Gastrocnemius medialis (tissue), 4 donors: ENCODE measurements at regions of chr1 and their contacts with region 1.

Region 1: DNA sequence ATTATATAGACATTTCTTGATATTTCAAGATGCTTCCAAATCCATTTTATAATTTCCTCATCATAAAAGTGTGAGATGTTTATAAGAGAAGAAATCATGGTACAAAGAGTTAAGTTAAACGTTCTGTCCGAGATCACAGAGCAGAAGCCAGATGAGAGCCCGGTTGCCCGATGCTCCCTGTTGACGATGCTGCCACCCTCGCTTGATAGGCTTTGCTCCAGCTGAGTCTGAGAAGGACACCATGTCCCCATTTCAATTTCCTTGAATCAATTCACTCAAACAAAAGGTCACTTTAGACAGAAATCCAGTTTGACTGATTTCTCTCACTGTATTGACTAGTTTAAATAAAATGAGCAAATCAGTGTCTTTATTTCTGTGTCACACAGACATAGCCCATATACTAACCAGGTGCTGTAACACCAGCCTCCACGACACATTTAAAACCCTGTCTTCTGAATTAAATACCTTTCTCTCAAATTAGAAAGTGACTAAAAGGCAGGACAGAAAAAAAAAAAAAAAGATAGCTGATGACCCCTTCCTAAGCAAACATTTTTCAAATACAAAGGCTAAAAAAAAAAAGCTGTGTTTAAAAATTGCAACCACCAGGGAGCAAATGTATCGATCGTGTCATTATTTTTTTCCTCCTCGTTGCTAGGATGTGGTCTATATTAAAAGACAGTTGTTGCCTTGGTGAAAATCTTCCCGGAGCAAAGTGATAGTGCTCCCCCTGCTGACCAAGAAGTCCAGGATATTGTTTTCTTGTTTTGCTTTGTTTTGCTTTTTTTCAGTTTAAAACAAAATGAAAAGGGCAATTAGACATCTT is 35.2 kb downstream of the DNASE2B start:
- DNase-seq: peak; percentile 24 to 26
- ATAC-seq: peak; percentile 84 to 88
- H3K4me3 ChIP-seq: peak overlapping the region; percentile 37 to 44 (median 44)
- H3K27ac ChIP-seq: peak overlapping the region in 2 of 4 donors; percentile 15 to 19
- H3K4me1 ChIP-seq: peaks cover 0 to 5% of the 10 kb centered on the region in 2 donors
- H3K27me3 ChIP-seq: no peaks in the 10 kb centered on the region
- CTCF ChIP-seq: peak; percentile 61 to 76 (median 74)
- POLR2A ChIP-seq: no peak

Region 2: GRCh38 chr1:83905315-83905907 is 528.1 kb before region 1 on chr1:
- in situ Hi-C with region 1: loop called in 1 of 4 experiments (anchors 25 kb)
- intact Hi-C with region 1: no loop called
- DNase-seq: no peak
- ATAC-seq: no peak
- H3K4me3 ChIP-seq: no peak overlapping the region
- H3K27ac ChIP-seq: no peak overlapping the region
- H3K4me1 ChIP-seq: no peaks in the 10 kb centered on the region
- H3K27me3 ChIP-seq: no peaks in the 10 kb centered on the region
- CTCF ChIP-seq: peak in 3 of 5 experiments; percentile 22 to 72 (median 62)
- POLR2A ChIP-seq: no peak

Region 3: GRCh38 chr1:84077476-84078107 is 355.9 kb before region 1 on chr1:
- in situ Hi-C with region 1: no loop called
- intact Hi-C with region 1: loop called (anchors 5 kb)
- DNase-seq: peak; percentile 12 to 42
- ATAC-seq: peak; percentile 92 to 94
- H3K4me3 ChIP-seq: peak overlapping the region; percentile 78 to 96 (median 80)
- H3K27ac ChIP-seq: peak overlapping the region; percentile 80 to 87 (median 86)
- H3K4me1 ChIP-seq: peaks cover 10 to 14% of the 10 kb centered on the region in 2 donors
- H3K27me3 ChIP-seq: no peaks in the 10 kb centered on the region
- CTCF ChIP-seq: no peak
- POLR2A ChIP-seq: peak in 1 of 2 donors; percentile 40

Region 4: GRCh38 chr1:84143796-84144565 is 289.5 kb before region 1 on chr1 and contains the start of gene PRKACB:
- in situ Hi-C with region 1: loop called (anchors 5 to 10 kb)
- intact Hi-C with region 1: loop called (anchors 1 kb)
- DNase-seq: no peak
- ATAC-seq: no peak
- H3K4me3 ChIP-seq: peak within 1 kb of the TSS in 1 of 4 donors; percentile 6
- H3K27ac ChIP-seq: no peak within 1 kb of the TSS
- H3K4me1 ChIP-seq: no peaks in the 10 kb centered on the region
- H3K27me3 ChIP-seq: no peaks in the 10 kb centered on the region
- CTCF ChIP-seq: no peak
- POLR2A ChIP-seq: peak in 1 of 2 donors; percentile 25
- total RNA-seq, gene PRKACB: 4.2 to 12.4 (median 7.0) TPM

Region 5: DNA sequence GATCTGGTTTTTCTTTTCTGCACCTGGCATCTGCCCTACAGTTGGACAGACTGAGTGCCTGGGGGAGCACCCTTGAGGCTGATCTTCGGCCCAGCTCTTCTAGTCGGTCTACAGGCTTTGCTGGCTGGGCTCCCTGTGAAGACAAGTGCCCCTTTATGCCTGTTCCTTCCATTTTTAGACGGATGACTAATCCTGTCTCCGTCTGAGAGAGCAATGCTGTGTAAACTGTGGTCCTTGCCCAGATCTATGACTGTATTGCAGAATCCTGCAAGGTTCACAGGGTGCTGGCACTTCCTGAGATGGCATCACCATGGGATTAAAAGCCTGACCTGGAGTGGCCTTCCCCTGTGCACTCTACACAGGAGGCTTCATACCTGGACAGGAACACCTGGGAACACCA is 179.6 kb before region 1 on chr1:
- in situ Hi-C with region 1: no loop called
- intact Hi-C with region 1: loop called (anchors 5 kb)
- DNase-seq: peak; percentile 61 to 83
- ATAC-seq: peak; percentile 99 to 100
- H3K4me3 ChIP-seq: no peak overlapping the region
- H3K27ac ChIP-seq: peak overlapping the region; percentile 62 to 70 (median 66)
- H3K4me1 ChIP-seq: peaks cover 6 to 8% of the 10 kb centered on the region in 2 donors
- H3K27me3 ChIP-seq: no peaks in the 10 kb centered on the region
- CTCF ChIP-seq: no peak
- POLR2A ChIP-seq: no peak

Region 6: GRCh38 chr1:84282780-84283333 is 150.6 kb before region 1 on chr1:
- in situ Hi-C with region 1: no loop called
- intact Hi-C with region 1: no loop called
- DNase-seq: no peak
- ATAC-seq: no peak
- H3K4me3 ChIP-seq: no peak overlapping the region
- H3K27ac ChIP-seq: no peak overlapping the region
- H3K4me1 ChIP-seq: no peaks in the 10 kb centered on the region
- H3K27me3 ChIP-seq: no peaks in the 10 kb centered on the region
- CTCF ChIP-seq: no peak
- POLR2A ChIP-seq: no peak

Region 7: GRCh38 chr1:84450910-84451309 is 17.4 kb after region 1 on chr1:
- in situ Hi-C with region 1: no loop called
- intact Hi-C with region 1: no loop called
- DNase-seq: no peak
- ATAC-seq: no peak
- H3K4me3 ChIP-seq: no peak overlapping the region
- H3K27ac ChIP-seq: no peak overlapping the region
- H3K4me1 ChIP-seq: no peaks in the 10 kb centered on the region
- H3K27me3 ChIP-seq: no peaks in the 10 kb centered on the region
- CTCF ChIP-seq: no peak
- POLR2A ChIP-seq: no peak

Region 8: GRCh38 chr1:84753516-84754385 is 320.3 kb after region 1 on chr1:
- in situ Hi-C with region 1: loop called (anchors 25 kb)
- intact Hi-C with region 1: no loop called
- DNase-seq: peak; percentile 17 to 31
- ATAC-seq: peak; percentile 66 to 69
- H3K4me3 ChIP-seq: no peak overlapping the region
- H3K27ac ChIP-seq: no peak overlapping the region
- H3K4me1 ChIP-seq: no peaks in the 10 kb centered on the region
- H3K27me3 ChIP-seq: peaks cover 0 to 9% (median 3%) of the 10 kb centered on the region in 3 donors
- CTCF ChIP-seq: peak; percentile 62 to 88 (median 75)
- POLR2A ChIP-seq: no peak